ENCODE measurements at regions of chr6 and their contacts with region 1.

Region 1: GRCh38 chr6:26196846-26197648 is 109.8 kb downstream of the HFE start:
- DNase-seq: peak; percentile 89 to 92
- H3K4me3 ChIP-seq: peak overlapping the region; percentile 63
- H3K4me3 Mint-ChIP-seq: peak overlapping the region; percentile 87
- H3K27ac Mint-ChIP-seq: peak overlapping the region; percentile 99
- H3K4me1 ChIP-seq: peaks cover 4% of the 10 kb centered on the region; the same call in 1 of the 2 replicates
- H3K4me1 Mint-ChIP-seq: peaks cover 27% of the 10 kb centered on the region
- H3K27me3 ChIP-seq: no peaks in the 10 kb centered on the region
- H3K27me3 Mint-ChIP-seq: peaks cover 3% of the 10 kb centered on the region
- CTCF ChIP-seq: no peak

Region 2: GRCh38 chr6:26031595-26032339 is 165.3 kb before region 1 on chr6:
- CTCF ChIA-PET with region 1: interaction called, 3 read pairs
- POLR2A ChIA-PET with region 1: interaction called, 15 read pairs
- intact Hi-C with region 1: loop called (anchors 5 kb)
- DNase-seq: peak; percentile 95 to 96
- H3K4me3 ChIP-seq: peak overlapping the region; percentile 66
- H3K4me3 Mint-ChIP-seq: peak overlapping the region; percentile 87
- H3K27ac Mint-ChIP-seq: peak overlapping the region; percentile 100
- H3K4me1 ChIP-seq: peaks cover 9% of the 10 kb centered on the region
- H3K4me1 Mint-ChIP-seq: peaks cover 51% of the 10 kb centered on the region
- H3K27me3 ChIP-seq: no peaks in the 10 kb centered on the region
- H3K27me3 Mint-ChIP-seq: peaks cover 4% of the 10 kb centered on the region
- CTCF ChIP-seq: no peak

Region 3: DNA sequence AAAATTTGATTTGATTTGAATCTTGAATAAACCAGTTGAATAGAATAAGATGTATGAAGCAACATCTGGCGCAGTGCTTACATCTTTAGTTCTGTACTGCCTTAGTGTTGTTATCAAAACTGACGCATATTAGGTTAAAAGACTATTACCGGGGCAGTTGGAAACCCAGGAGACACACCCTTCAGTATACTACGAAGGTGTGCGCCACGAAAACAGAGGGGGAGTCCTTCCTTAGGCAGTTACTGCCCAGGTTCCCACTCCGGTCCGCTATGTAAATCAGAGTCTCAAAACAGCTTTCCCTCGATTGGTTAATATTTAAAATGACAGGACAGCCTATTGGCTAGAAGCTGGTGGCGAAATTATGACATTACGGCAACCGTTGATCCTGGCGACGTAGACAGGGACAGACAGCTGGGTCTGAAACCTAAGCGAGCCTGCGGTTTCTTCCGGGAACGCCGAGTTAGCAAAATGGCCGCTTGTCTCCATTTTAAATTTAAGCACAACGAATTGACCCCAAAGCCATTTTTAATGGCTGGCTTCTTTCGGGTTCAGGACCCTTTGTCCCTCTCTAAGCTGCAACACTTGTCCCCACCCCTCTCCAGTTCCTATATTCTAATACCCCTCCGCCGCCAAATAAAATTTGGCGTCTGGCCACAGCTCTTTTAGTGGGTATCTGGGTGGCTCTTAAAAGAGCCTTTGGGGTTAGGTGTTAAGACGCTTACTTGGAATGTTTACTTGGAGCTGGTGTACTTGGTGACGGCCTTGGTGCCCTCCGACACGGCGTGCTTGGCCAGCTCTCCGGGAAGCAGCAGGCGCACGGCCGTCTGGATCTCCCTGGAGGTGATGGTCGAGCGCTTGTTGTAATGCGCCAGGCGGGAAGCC is 74.0 kb before region 1 on chr6:
- CTCF ChIA-PET with region 1: interaction called, 3 read pairs
- POLR2A ChIA-PET with region 1: interaction called, 103 read pairs
- intact Hi-C with region 1: loop called (anchors 2 kb)
- DNase-seq: peak; percentile 96 to 98
- H3K4me3 ChIP-seq: peak overlapping the region; percentile 44
- H3K4me3 Mint-ChIP-seq: peak overlapping the region; percentile 90
- H3K27ac Mint-ChIP-seq: peak overlapping the region; percentile 99
- H3K4me1 ChIP-seq: peaks cover 23% of the 10 kb centered on the region
- H3K4me1 Mint-ChIP-seq: peaks cover 36% of the 10 kb centered on the region
- H3K27me3 ChIP-seq: no peaks in the 10 kb centered on the region
- H3K27me3 Mint-ChIP-seq: no peaks in the 10 kb centered on the region
- CTCF ChIP-seq: no peak

Region 4: GRCh38 chr6:26216356-26216885 is 19.4 kb after region 1 on chr6:
- CTCF ChIA-PET with region 1: no interaction called
- POLR2A ChIA-PET with region 1: interaction called, 142 read pairs
- intact Hi-C with region 1: no loop called
- DNase-seq: peak in 1 of 2 experiments; percentile 85
- H3K4me3 ChIP-seq: peak overlapping the region; percentile 66
- H3K4me3 Mint-ChIP-seq: no peak overlapping the region
- H3K27ac Mint-ChIP-seq: no peak overlapping the region
- H3K4me1 ChIP-seq: no peaks in the 10 kb centered on the region
- H3K4me1 Mint-ChIP-seq: no peaks in the 10 kb centered on the region
- H3K27me3 ChIP-seq: no peaks in the 10 kb centered on the region
- H3K27me3 Mint-ChIP-seq: no peaks in the 10 kb centered on the region
- CTCF ChIP-seq: no peak

Region 5: DNA sequence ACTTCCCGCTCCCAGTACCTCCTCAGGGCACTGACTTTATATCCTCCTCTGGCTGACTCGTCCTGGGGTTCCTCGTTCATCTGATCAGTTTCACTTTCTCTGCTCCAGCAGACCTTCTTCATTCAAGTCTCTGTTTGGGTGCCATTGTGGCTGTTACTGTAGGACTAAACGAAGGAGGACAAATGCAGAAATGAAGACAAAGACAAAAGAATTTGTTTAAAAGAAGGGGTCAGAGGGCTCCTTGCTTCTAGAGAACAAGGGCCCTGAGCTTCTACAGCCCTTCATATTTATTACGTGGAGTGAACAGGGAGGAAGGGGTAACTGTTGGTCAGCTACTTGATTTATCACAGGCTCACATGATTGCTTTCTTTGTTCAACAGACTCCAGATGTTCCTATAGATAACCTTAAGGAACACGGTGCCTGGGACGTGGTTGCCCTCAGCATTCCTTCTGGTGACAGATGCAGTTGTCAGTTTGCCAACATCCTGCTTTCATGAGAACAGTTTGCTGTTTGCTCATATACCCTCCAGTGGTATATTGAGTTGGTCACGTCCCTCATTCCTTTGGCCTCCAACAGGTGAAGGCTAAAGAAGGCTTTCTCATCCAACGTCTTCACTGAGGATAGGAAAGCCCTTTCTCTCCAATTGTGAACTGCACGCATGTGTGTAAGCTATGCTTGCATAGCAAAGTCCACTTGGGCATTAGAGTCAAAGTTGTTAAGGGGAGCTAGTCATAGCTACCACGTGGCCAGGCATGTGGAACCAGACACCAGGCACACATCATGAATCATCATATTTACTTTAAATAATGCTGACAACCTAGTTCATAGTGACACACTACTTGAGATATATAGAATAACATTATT is 98.9 kb after region 1 on chr6:
- CTCF ChIA-PET with region 1: no interaction called
- POLR2A ChIA-PET with region 1: interaction called, 15 read pairs
- intact Hi-C with region 1: no loop called
- DNase-seq: peak in 1 of 2 experiments; percentile 41
- H3K4me3 ChIP-seq: no peak overlapping the region
- H3K4me3 Mint-ChIP-seq: peak overlapping the region; percentile 31
- H3K27ac Mint-ChIP-seq: no peak overlapping the region
- H3K4me1 ChIP-seq: 0 out of 2 replicates have a peak, but pooled peaks cover 9% of the 10 kb centered on the region
- H3K4me1 Mint-ChIP-seq: no peaks in the 10 kb centered on the region
- H3K27me3 ChIP-seq: no peaks in the 10 kb centered on the region
- H3K27me3 Mint-ChIP-seq: no peaks in the 10 kb centered on the region
- CTCF ChIP-seq: no peak

Region 6: DNA sequence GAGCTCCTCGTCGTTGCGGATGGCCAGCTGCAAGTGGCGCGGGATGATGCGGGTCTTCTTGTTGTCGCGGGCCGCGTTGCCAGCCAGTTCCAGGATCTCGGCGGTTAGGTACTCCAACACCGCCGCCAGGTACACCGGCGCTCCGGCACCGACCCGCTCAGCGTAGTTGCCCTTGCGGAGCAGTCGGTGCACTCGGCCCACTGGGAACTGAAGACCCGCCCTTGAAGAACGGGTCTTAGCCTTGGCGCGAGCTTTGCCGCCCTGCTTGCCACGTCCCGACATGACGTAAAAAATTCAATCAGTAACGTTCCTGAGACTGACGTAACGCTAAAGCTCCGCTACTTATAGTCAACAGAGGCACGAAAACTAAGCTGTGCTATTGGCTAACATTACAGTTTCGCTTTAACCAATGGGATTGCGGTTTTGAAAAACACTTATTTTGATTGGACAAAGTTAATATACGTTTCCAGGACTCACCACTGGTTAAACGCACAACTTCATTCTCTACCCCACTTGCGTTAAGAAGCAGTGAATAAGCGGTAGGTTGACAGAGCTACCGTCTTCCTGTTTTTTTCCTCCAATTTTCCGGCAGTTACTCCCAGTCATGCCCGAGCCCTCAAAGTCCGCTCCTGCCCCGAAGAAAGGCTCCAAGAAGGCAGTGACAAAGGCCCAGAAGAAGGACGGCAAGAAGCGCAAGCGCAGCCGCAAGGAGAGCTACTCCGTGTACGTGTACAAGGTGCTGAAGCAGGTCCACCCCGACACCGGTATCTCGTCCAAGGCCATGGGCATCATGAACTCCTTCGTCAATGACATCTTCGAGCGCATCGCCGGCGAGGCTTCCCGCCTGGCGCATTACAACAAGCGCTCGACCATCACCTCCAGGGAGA is 1641.3 kb after region 1 on chr6:
- CTCF ChIA-PET with region 1: no interaction called
- POLR2A ChIA-PET with region 1: interaction called, 10 read pairs
- intact Hi-C with region 1: no loop called
- DNase-seq: peak; percentile 91 to 92
- H3K4me3 ChIP-seq: peak overlapping the region; percentile 77
- H3K4me3 Mint-ChIP-seq: no peak overlapping the region
- H3K27ac Mint-ChIP-seq: no peak overlapping the region
- H3K4me1 ChIP-seq: peaks cover 14% of the 10 kb centered on the region; the same call in 1 of the 2 replicates
- H3K4me1 Mint-ChIP-seq: peaks cover 21% of the 10 kb centered on the region
- H3K27me3 ChIP-seq: no peaks in the 10 kb centered on the region
- H3K27me3 Mint-ChIP-seq: no peaks in the 10 kb centered on the region
- CTCF ChIP-seq: no peak

Measured in Caco-2 (cell line).